Kidney (tissue), 22 donors: ENCODE measurements at regions of chr12 and their contacts with region 1.

Region 1: DNA sequence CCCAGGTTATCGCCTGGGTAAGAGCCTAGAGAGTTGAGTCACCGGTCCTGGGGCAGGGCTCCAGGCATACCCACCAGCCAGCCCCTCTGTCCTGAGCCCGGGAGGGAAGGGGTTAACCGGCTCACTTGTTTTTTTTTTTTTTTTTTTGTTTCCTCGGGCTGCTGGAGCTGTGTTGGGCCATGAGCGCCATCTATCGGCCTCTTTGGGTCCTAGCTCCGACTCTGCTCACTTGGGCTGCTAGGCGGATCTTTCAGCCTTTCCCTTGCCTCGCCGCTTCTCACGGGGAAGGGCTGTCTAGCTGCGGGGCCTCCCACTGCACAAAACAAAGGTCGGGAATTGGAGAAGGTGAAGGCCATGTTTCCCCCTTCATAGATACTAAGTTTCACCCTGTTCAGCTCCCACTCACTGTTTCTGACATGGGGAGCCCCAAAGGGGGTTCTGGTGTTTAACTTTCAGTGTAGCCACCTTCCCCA is 2.8 kb upstream of the SMUG1 start:
- DNase-seq: peak; percentile 92 to 97 (median 95)
- H3K4me3 ChIP-seq: no peak overlapping the region
- H3K27ac ChIP-seq: no peak overlapping the region
- H3K4me1 ChIP-seq: peaks cover 0 to 12% (median 6%) of the 10 kb centered on the region in 3 donors
- H3K27me3 ChIP-seq: no peaks in the 10 kb centered on the region
- CTCF ChIP-seq: peak; percentile 93

Region 2: DNA sequence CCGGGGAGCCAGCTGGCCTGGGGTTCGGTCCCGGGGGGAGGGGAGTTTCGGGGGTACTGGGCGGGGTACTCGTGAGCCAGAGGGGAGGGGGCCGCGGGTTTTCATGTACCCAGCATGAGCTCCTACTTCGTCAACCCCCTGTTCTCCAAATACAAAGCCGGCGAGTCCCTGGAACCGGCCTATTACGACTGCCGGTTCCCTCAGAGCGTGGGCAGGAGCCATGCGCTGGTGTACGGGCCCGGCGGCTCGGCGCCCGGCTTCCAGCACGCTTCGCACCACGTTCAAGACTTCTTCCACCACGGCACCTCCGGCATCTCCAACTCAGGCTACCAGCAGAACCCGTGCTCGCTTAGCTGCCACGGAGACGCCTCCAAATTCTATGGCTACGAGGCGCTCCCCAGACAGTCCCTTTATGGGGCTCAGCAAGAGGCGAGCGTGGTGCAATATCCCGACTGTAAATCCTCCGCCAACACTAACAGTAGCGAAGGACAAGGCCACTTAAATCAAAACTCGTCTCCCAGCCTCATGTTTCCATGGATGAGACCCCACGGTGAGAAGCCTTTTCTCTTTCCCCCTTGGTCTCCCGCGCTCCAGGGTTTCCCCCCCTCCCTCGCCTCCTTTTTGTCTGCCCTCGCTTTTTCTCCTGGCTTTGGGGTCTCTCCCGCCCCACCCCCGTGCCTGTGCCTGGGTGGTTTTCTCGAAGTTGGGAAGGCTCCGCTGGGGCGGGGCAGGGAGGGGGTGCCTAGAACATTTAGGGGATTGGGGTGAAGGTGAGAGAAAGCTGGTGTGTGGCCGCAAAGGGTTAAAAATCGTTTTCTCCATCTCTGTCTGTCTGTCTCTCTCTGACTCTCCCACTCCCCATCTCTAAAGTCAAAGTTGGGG is 182.2 kb before region 1 on chr12:
- intact Hi-C with region 1: loop called (anchors 5 kb)
- DNase-seq: peak in 1 of 5 donors; percentile 67
- H3K4me3 ChIP-seq: peak overlapping the region; percentile 49 to 59 (median 51)
- H3K27ac ChIP-seq: peak overlapping the region; percentile 33 to 67
- H3K4me1 ChIP-seq: peaks cover 4 to 29% (median 19%) of the 10 kb centered on the region in 3 donors
- H3K27me3 ChIP-seq: peaks cover 4% of the 10 kb centered on the region
- CTCF ChIP-seq: no peak

Region 3: GRCh38 chr12:54032627-54033100 is 158.9 kb before region 1 on chr12 and contains the start of gene HOXC5:
- intact Hi-C with region 1: loop called (anchors 5 kb)
- DNase-seq: peak; percentile 87 to 96 (median 95)
- H3K4me3 ChIP-seq: peak within 1 kb of the TSS; percentile 3 to 61 (median 51)
- H3K27ac ChIP-seq: peak within 1 kb of the TSS in 1 of 2 donors; percentile 37
- H3K4me1 ChIP-seq: peaks cover 2 to 30% (median 14%) of the 10 kb centered on the region in 3 donors
- H3K27me3 ChIP-seq: no peaks in the 10 kb centered on the region
- CTCF ChIP-seq: peak; percentile 96
- total RNA-seq, gene HOXC5: 4.8 TPM

Region 4: DNA sequence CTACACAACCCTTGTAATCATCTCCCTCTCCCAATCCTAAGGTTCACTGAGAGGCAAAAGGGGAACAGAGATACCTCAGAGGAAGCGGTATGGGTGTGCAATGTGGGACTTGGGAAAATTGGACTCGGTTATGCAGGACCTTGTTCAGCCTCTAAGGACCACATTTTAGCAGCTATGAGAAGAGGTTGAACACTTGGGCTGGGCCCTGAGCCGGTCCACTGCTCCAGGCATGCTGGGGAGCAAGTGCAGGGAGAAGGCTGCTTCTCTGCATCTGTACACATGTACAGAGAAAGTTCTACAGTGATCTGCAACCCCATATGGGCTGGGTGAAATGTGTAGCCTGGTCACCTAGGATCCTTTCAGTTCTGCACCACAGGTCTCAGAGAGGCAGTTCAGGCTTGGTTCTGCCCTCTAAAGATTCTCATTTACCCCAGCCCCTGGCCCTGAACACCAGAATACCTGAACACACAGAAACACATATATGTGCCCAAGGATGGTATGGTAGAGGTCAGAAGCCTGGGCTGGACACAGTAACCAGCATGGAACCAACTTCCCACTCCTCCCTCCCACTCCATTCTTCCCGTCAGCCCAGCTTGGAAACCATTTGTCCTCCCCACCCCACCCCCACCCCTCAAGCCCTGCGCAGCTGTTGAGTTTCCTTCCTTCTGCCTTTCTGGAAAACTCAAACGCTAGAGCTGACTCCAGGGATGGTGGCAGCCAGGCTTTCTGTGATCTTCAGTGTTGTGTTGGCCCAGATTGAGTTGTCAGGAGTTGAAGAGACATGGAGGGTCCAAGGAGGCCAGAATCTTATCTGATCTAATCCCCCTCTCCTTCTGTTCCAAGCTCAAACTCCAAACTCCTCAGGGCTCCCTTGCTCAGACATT is 148.4 kb before region 1 on chr12:
- intact Hi-C with region 1: no loop called
- DNase-seq: peak in 4 of 5 donors; percentile 60 to 88 (median 71)
- H3K4me3 ChIP-seq: peak overlapping the region in 1 of 3 donors; percentile 11
- H3K27ac ChIP-seq: peak overlapping the region; percentile 43 to 51
- H3K4me1 ChIP-seq: peaks cover 14 to 27% (median 24%) of the 10 kb centered on the region in 3 donors
- H3K27me3 ChIP-seq: peaks cover 4% of the 10 kb centered on the region
- CTCF ChIP-seq: no peak

Region 5: DNA sequence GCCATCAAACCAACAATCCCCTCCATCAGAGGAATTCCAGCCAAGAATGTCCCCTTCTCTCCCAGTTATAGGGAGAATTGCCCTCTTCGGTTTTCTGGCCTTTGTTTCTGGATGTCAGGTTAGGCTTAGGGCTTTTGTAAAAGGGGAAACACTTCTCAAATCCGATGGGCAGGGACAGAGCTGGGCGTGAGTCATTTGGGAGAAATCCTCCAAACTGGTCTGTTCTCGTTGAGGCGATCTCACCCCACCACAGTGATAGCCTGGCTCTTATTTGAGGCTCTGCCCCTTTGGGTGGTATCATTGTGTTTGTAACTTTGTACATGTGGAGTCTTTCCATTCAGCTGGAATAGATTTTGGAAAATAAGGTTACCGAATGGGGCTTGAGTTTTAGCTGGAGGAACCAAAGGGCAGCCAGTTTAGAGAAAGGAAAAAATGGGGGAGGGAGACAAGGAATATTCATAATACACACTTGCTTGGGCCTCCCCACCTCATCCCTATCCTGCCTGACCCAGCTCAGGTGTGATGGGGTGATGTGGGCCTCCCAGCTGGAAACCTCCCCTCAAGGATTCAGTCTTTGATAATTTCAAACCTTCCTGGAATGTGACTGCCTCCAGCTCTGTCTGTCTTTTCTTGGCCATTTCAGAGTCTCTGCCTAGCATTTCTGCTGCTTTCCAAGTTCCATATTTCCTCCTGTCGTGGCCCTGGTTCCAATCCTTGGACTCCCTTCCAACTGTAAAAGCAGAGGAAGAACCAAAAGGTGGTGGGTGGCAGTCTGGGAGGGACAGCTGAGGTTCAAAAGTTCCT is 130.4 kb before region 1 on chr12:
- intact Hi-C with region 1: no loop called
- DNase-seq: no peak
- H3K4me3 ChIP-seq: no peak overlapping the region
- H3K27ac ChIP-seq: no peak overlapping the region
- H3K4me1 ChIP-seq: peaks cover 0 to 6% (median 0%) of the 10 kb centered on the region in 3 donors
- H3K27me3 ChIP-seq: no peaks in the 10 kb centered on the region
- CTCF ChIP-seq: no peak